Spleen (tissue), 13 donors: ENCODE measurements at regions of chr7 and their contacts with region 1.

Region 1: DNA sequence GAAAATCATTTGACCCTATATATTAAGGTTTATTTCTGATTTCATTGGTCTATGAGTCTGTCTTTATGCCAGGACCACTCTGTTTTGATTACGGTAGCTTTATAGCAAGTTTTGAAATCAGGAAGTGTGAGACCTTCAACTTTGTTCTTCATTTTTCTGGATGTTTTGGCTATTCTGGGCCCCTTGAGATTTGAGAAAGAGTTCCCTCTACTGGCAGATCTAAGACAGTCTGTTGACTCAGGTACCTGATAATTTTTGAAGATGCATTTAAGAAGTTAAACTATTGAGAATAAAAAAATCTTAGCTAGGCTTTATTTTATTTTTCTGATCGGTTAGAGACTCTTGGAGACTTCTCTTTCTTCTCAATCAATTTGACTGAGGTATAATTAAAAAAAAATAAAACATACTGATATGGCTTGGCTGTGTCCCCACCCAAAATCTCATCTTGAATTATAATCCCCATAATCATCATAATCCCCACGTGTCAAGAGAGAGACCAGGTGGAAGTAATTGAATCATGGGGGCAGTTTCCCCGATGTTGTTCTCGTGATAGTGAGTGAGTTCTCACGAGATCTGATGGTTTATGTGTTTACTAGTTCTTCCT is 209.2 kb downstream of the SNX10 start:
- DNase-seq: no peak
- H3K4me3 ChIP-seq: no peak overlapping the region
- H3K27ac ChIP-seq: no peak overlapping the region
- H3K4me1 ChIP-seq: no peaks in the 10 kb centered on the region
- H3K27me3 ChIP-seq: no peaks in the 10 kb centered on the region
- CTCF ChIP-seq: peak in 10 of 11 experiments; percentile 5 to 57 (median 40)
- POLR2A ChIP-seq: no peak

Region 2: DNA sequence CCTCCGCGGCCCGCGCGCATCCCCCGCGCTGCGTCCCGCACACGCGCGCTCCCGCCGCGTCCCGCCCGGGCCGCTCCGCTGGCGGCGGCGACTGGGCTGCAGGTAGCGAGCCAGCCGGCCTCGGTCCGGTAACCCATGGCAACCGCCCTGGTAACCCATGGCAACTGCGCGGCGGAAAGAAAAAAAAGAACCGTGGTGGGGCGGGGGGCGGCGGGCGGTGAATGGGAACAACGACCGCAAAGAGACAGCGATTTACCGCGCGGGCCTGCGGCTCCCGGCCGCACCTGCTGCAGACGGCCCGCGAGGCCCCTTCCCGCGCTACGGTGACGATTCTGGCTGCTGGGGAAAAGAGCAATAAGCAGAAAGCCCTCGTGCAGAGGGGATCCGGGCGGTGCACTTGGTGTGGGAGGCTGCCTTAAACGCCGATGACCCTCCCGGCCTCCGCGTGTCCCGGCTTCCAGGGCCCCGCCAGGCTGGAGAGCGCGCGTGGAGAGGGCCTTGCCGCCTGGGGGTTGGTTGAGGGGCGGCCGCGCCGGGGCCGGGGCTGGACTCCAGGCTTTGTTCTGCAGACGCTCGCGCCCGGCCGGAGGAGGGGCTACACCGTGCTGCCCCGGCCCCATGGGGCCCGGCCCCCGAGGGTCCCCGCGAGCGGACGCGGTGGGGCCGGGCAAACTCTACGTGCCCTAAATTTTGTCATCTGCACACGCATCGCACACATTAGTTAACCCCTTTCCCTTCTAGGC is 124.5 kb before region 1 on chr7:
- intact Hi-C with region 1: loop called (anchors 10 kb)
- DNase-seq: peak; percentile 84
- H3K4me3 ChIP-seq: peak overlapping the region; percentile 38 to 77 (median 60)
- H3K27ac ChIP-seq: peak overlapping the region in 7 of 8 donors; percentile 54 to 82 (median 69)
- H3K4me1 ChIP-seq: peaks cover 8 to 28% (median 19%) of the 10 kb centered on the region in 6 donors
- H3K27me3 ChIP-seq: peaks cover 0 to 50% (median 28%) of the 10 kb centered on the region in 7 donors
- CTCF ChIP-seq: no peak
- POLR2A ChIP-seq: no peak

Region 3: GRCh38 chr7:26449175-26450165 is 51.4 kb before region 1 on chr7:
- intact Hi-C with region 1: loop called (anchors 5 kb)
- DNase-seq: no peak
- H3K4me3 ChIP-seq: no peak overlapping the region
- H3K27ac ChIP-seq: no peak overlapping the region
- H3K4me1 ChIP-seq: no peaks in the 10 kb centered on the region
- H3K27me3 ChIP-seq: no peaks in the 10 kb centered on the region
- CTCF ChIP-seq: no peak
- POLR2A ChIP-seq: no peak

Region 4: DNA sequence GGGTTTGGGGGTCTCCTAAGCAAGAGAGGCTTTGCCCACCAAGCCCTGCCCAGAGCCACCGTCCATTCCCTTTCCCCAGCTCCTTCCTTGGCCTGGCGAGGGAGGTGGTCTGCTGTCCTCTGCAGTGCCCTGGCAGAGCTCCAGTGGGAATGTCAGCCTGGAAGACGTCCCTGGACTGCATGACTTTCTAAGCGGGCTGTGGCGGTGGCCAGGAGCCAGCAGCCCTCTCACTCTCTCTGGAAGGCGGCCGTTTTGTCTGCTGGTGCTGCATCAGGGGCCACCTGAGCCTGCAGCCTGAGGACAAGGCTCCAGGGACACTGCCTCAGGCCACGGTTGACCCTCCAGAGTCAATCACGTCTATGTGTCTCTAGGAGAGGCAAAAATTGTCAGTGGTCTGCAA is 92.5 kb after region 1 on chr7:
- intact Hi-C with region 1: no loop called
- DNase-seq: no peak
- H3K4me3 ChIP-seq: no peak overlapping the region
- H3K27ac ChIP-seq: no peak overlapping the region
- H3K4me1 ChIP-seq: no peaks in the 10 kb centered on the region
- H3K27me3 ChIP-seq: peaks cover 0 to 10% (median 0%) of the 10 kb centered on the region in 7 donors
- CTCF ChIP-seq: no peak
- POLR2A ChIP-seq: no peak

Region 5: DNA sequence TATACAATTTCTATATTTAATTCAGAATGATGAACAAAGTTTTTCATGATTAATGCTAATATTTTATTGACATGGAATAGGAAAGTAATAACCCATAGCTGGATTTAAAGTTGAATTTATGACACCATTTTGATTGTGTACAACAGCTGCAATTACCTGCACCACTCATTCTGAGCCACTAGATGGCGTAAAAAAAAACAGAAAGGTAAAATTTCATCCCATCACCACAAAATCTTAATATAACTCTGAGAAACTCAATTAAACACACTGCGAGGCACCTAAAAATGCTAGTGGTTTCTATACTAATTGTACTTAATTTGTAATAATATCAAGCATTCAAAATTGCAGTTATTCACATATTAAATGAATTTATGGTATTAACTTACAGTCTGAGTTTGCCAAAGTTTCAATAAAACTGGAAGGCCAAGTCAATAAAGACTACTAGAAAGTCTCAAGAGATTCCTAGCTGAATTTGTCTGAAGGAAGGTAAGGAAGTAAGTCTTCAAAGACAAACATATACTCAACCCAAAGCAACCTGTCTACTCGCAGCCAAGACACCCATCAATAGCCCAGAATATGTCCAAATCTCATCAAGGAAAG is 181.1 kb after region 1 on chr7:
- intact Hi-C with region 1: no loop called
- DNase-seq: no peak
- H3K4me3 ChIP-seq: no peak overlapping the region
- H3K27ac ChIP-seq: no peak overlapping the region
- H3K4me1 ChIP-seq: peaks cover 0 to 35% (median 8%) of the 10 kb centered on the region in 6 donors
- H3K27me3 ChIP-seq: no peaks in the 10 kb centered on the region
- CTCF ChIP-seq: peak; percentile 35 to 90 (median 68)
- POLR2A ChIP-seq: no peak